Adrenal gland (tissue), 19 donors: ENCODE measurements at regions of chr14 and their contacts with region 1.

Region 1: GRCh38 chr14:68377459-68377858 is 415.4 kb downstream of the ZFP36L1 start:
- DNase-seq: peak; percentile 42 to 74 (median 51)
- H3K4me3 ChIP-seq: no peak overlapping the region
- H3K27ac ChIP-seq: peak overlapping the region; percentile 8 to 69 (median 46)
- H3K4me1 ChIP-seq: peaks cover 0 to 12% of the 10 kb centered on the region in 2 donors
- H3K27me3 ChIP-seq: no peaks in the 10 kb centered on the region
- CTCF ChIP-seq: no peak
- POLR2A ChIP-seq: peak in 1 of 2 donors; percentile 23

Region 2: GRCh38 chr14:68307014-68307789 is 70.3 kb before region 1 on chr14:
- intact Hi-C with region 1: loop called in 1 of 2 experiments (anchors 10 kb)
- DNase-seq: no peak
- H3K4me3 ChIP-seq: no peak overlapping the region
- H3K27ac ChIP-seq: peak overlapping the region in 1 of 5 donors; percentile 12
- H3K4me1 ChIP-seq: peaks cover 0 to 31% of the 10 kb centered on the region in 2 donors
- H3K27me3 ChIP-seq: no peaks in the 10 kb centered on the region
- CTCF ChIP-seq: no peak
- POLR2A ChIP-seq: no peak